Motor neuron (in vitro differentiated cells): ENCODE measurements at regions of chr17 and their contacts with region 1.

Region 1: GRCh38 chr17:66255112-66255511 is 25.9 kb upstream of the APOH start:
- ATAC-seq: peak in 7 of 8 experiments; percentile 45 to 89 (median 74)
- H3K4me3 ChIP-seq: no peak overlapping the region
- H3K27ac ChIP-seq: no peak overlapping the region
- H3K4me1 ChIP-seq: no peaks in the 10 kb centered on the region

Region 2: DNA sequence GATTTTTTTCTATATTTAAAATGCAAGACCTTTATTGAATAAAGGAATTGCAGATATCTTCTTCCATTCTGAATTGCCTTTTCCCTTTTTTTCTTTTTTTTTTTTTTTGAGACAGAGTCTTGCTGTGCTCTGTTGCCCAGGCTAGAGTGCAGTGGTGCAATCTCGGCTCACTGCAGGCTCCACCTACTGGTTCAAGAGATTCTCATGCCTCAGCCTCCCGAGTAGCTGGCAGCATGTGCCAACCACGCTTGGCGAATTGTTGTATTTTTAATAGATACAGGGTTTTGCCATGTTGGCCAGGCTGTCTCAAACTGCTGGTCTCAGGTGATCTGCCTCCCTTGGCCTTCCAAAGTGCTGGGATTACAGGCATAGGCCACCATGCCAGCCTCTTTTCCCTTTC is 214.7 kb before region 1 on chr17:
- in situ Hi-C with region 1: no loop called
- ATAC-seq: no peak
- H3K4me3 ChIP-seq: no peak overlapping the region
- H3K27ac ChIP-seq: no peak overlapping the region
- H3K4me1 ChIP-seq: no peaks in the 10 kb centered on the region

Region 3: GRCh38 chr17:66567234-66568170 is 312.4 kb after region 1 on chr17:
- in situ Hi-C with region 1: loop called in 1 of 9 experiments (anchors 25 kb)
- ATAC-seq: peak; percentile 36 to 96 (median 70)
- H3K4me3 ChIP-seq: no peak overlapping the region
- H3K27ac ChIP-seq: no peak overlapping the region
- H3K4me1 ChIP-seq: peaks cover 8 to 9% of the 10 kb centered on the region in 2 donors

Region 4: GRCh38 chr17:66673668-66674315 is 418.7 kb after region 1 on chr17:
- in situ Hi-C with region 1: loop called in 5 of 9 experiments (anchors 25 kb)
- ATAC-seq: peak; percentile 49 to 89 (median 76)
- H3K4me3 ChIP-seq: no peak overlapping the region
- H3K27ac ChIP-seq: no peak overlapping the region
- H3K4me1 ChIP-seq: peaks cover 2 to 6% of the 10 kb centered on the region in 2 donors

Region 5: DNA sequence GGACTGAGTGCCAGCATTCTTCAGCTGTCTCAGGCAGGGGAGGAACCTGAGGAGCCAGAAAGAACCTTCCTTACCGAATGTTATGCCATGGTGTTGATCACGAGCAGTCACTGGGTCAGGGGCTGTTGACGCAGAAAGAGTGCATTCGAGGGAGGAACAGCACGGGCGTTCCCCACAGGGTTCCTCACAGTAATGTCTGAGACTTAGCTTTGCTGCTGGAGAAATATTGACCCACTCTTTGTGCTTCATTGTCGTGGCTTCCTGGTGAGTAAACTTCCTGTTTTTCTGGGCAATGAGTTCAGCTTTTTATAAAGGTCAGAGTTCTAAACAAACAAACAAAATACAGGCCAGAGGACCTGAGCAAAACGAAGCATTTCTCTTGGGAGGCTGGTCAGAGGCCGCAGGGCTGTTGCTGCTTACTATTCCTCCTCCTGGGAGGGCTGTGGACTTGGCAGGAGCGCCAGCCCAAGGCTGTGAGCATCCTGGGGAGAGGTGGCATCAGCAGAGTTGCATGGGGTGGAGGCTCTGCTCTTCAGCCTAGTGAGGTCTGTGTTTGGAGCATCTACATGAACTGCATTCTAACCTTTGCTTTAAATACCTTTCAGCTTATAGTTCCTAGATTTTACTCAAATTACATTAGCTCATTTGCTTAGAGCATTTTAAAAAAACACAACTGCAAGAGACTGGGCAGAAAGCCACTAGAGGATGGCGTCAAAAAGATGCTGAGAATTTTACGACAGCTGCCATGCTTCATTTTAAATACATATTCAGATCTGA is 436.7 kb after region 1 on chr17:
- in situ Hi-C with region 1: loop called in 1 of 9 experiments (anchors 25 kb)
- ATAC-seq: peak in 2 of 8 experiments; percentile 38 to 48
- H3K4me3 ChIP-seq: no peak overlapping the region
- H3K27ac ChIP-seq: no peak overlapping the region
- H3K4me1 ChIP-seq: peaks cover 0 to 5% of the 10 kb centered on the region in 2 donors